ENCODE measurements at regions of chr3 and their contacts with region 1.

Region 1: GRCh38 chr3:30012941-30013543 is 593.4 kb upstream of the TGFBR2 start:
- DNase-seq: peak; percentile 30
- ATAC-seq: peak; percentile 70; the same call in 1 of the 2 replicates
- H3K4me3 ChIP-seq: no peak overlapping the region
- H3K27ac ChIP-seq: no peak overlapping the region
- H3K4me1 ChIP-seq: no peaks in the 10 kb centered on the region
- H3K27me3 ChIP-seq: no peaks in the 10 kb centered on the region
- CTCF ChIP-seq: peak; percentile 68

Region 2: DNA sequence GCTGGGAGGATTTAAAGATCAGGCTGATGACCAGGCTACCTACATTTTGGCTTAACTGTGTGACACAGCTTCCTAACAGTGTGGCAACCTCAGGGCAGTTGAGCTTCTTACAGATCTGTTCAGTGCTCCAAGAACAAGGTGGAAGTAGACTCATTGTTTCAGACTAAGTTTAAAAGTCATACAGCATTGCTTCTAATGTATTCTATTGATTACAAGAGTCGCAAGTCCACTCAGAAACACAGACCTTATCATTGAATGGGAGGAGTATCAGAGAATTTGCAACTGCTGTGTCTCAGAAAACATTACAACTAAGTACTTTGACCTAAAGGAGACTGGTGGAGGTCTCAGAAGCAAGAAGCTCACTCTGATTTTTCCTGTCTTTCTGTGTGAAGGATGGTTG is 13.8 kb after region 1 on chr3:
- CTCF ChIA-PET with region 1: no interaction called
- POLR2A ChIA-PET with region 1: no interaction called
- in situ Hi-C with region 1: no loop called
- intact Hi-C with region 1: no loop called
- DNase-seq: no peak
- ATAC-seq: no peak
- H3K4me3 ChIP-seq: no peak overlapping the region
- H3K27ac ChIP-seq: no peak overlapping the region
- H3K4me1 ChIP-seq: no peaks in the 10 kb centered on the region
- H3K27me3 ChIP-seq: no peaks in the 10 kb centered on the region
- CTCF ChIP-seq: no peak

Region 3: DNA sequence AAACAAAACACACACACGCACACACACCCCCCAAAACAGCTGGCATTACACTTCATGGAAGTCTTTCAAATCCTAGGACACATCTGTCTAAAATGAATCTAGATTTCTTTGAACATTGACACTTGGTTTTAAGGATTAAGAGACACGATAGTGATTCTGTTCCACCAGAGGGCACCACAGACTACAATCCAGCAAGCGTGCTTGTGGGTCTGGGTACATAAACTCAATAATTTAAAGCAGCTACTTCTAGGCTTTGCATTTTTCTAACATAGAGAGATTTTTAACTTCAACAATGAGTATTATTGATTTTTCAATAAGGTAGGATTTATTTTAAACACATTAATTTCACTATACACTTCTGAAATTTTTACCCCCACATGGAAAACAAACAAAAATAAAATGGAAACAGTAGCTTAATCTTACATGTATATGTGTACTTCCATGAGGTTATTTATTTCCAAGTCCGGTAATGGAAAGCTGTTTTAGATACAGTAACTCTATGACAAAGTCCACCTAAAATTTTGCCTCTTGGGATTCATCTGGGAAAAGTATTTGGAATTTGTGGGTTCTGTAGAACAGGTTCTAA is 29.3 kb after region 1 on chr3:
- CTCF ChIA-PET with region 1: no interaction called
- POLR2A ChIA-PET with region 1: no interaction called
- in situ Hi-C with region 1: no loop called
- intact Hi-C with region 1: no loop called
- DNase-seq: peak; percentile 38
- ATAC-seq: peak; percentile 70; the same call in 1 of the 2 replicates
- H3K4me3 ChIP-seq: no peak overlapping the region
- H3K27ac ChIP-seq: no peak overlapping the region
- H3K4me1 ChIP-seq: no peaks in the 10 kb centered on the region; the same call in 1 of the 2 replicates
- H3K27me3 ChIP-seq: no peaks in the 10 kb centered on the region
- CTCF ChIP-seq: peak; percentile 65; the same call in 1 of the 2 replicates

Region 4: GRCh38 chr3:30199096-30199759 is 186.2 kb after region 1 on chr3:
- CTCF ChIA-PET with region 1: interaction called, 3 read pairs
- POLR2A ChIA-PET with region 1: no interaction called
- in situ Hi-C with region 1: no loop called
- intact Hi-C with region 1: loop called (anchors 5 kb)
- DNase-seq: no peak
- ATAC-seq: no peak
- H3K4me3 ChIP-seq: no peak overlapping the region
- H3K27ac ChIP-seq: no peak overlapping the region
- H3K4me1 ChIP-seq: no peaks in the 10 kb centered on the region
- H3K27me3 ChIP-seq: no peaks in the 10 kb centered on the region
- CTCF ChIP-seq: peak; percentile 72; the same call in 1 of the 2 replicates